Gastrocnemius medialis (tissue), 4 donors: ENCODE measurements at regions of chr3 and their contacts with region 1.

Region 1: DNA sequence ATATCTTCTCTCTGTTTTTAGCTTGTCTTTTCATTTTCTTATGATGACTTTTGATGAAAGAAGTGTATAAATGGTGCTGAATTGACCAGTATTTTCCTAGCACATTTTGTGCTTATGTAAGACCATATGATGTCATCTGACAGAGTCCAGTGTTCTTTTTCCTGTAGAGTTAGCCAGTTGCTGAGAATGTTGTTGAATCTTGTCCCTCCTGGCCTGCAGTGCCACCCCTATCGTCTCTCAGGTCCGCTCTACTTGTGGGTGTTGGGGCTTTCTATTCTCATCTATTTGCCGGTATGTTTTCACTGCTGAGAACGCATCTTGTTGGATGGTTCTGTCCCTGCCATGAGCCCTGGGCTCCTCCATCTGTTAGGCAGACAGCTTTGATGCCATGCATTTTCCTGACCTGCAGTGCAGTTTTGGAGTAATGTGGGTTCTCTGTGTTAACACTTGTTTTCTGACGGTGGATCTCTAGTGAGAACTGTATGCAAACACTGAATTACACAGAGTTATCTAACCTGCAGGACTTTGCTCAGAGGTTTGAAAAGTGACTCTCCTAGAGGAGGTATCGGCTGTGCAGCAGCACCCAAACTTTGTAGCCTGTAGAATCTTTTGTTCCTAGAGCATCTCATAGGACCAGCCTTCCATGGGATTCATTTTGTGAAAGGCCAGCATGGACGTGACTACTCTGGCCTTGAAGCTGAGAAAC is 44.6 kb downstream of the SLC6A20 start:
- DNase-seq: no peak
- ATAC-seq: no peak
- H3K4me3 ChIP-seq: no peak overlapping the region
- H3K27ac ChIP-seq: no peak overlapping the region
- H3K4me1 ChIP-seq: peaks cover 0 to 5% of the 10 kb centered on the region in 2 donors
- H3K27me3 ChIP-seq: no peaks in the 10 kb centered on the region
- CTCF ChIP-seq: no peak
- POLR2A ChIP-seq: no peak

Region 2: DNA sequence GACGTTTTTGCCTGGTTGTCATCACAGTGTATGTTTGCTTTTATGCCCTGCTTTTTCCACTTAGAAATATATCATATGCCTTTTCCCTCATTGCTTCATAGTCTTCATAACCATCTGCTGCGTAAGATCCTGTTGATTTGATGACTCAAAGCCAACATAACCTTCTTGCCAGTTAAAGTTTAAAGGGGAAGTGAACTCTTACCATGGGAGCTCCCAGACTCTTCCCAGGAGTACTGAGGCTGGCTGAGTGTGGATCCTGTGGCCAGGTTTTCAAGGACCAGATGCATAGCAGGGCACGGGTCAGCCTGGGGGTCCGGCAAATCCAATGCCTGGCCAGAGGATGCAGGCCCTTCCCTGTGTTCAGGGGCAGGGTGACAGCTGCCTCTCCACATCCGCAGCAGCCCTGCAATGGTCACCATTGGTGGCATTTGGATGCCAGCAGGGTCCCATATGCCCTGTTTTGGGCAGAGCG is 104.5 kb before region 1 on chr3:
- in situ Hi-C with region 1: no loop called
- intact Hi-C with region 1: no loop called
- DNase-seq: no peak
- ATAC-seq: peak; percentile 94 to 96
- H3K4me3 ChIP-seq: no peak overlapping the region
- H3K27ac ChIP-seq: peak overlapping the region; percentile 74 to 80 (median 77)
- H3K4me1 ChIP-seq: peaks cover 35 to 53% of the 10 kb centered on the region in 2 donors
- H3K27me3 ChIP-seq: no peaks in the 10 kb centered on the region
- CTCF ChIP-seq: no peak
- POLR2A ChIP-seq: no peak

Region 3: GRCh38 chr3:45736707-45737106 is 15.0 kb before region 1 on chr3:
- in situ Hi-C with region 1: no loop called
- intact Hi-C with region 1: no loop called
- DNase-seq: no peak
- ATAC-seq: no peak
- H3K4me3 ChIP-seq: no peak overlapping the region
- H3K27ac ChIP-seq: no peak overlapping the region
- H3K4me1 ChIP-seq: peaks cover 0 to 9% of the 10 kb centered on the region in 2 donors
- H3K27me3 ChIP-seq: no peaks in the 10 kb centered on the region
- CTCF ChIP-seq: no peak
- POLR2A ChIP-seq: no peak

Region 4: DNA sequence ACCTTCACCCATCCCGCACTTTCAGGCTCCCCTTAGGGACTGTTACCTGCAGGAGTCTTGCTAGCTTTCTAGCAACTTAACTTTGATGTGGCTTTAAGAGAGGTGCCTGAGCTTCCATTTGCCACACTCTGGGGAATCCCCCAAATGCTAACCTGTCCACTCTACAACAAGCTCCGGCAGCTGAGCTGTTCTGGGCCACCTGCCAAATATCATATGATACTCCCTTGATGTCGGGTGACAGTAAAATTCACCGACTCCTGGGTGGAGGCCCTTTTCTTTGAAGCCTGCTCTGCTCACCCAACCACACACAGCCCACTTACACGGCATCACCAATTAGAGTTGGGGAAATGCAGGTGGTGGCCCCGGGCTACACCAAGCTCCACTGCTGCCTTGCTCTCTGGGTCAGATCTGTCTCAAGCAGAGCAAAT is 313.6 kb after region 1 on chr3:
- in situ Hi-C with region 1: loop called in 2 of 4 experiments (anchors 10 to 25 kb)
- intact Hi-C with region 1: no loop called
- DNase-seq: peak; percentile 82 to 85
- ATAC-seq: peak; percentile 96 to 98
- H3K4me3 ChIP-seq: no peak overlapping the region
- H3K27ac ChIP-seq: peak overlapping the region; percentile 49 to 79 (median 74)
- H3K4me1 ChIP-seq: peaks cover 33 to 47% of the 10 kb centered on the region in 2 donors
- H3K27me3 ChIP-seq: no peaks in the 10 kb centered on the region
- CTCF ChIP-seq: no peak
- POLR2A ChIP-seq: no peak